ENCODE measurements at regions of chr1 and their contacts with region 1.

Region 1: DNA sequence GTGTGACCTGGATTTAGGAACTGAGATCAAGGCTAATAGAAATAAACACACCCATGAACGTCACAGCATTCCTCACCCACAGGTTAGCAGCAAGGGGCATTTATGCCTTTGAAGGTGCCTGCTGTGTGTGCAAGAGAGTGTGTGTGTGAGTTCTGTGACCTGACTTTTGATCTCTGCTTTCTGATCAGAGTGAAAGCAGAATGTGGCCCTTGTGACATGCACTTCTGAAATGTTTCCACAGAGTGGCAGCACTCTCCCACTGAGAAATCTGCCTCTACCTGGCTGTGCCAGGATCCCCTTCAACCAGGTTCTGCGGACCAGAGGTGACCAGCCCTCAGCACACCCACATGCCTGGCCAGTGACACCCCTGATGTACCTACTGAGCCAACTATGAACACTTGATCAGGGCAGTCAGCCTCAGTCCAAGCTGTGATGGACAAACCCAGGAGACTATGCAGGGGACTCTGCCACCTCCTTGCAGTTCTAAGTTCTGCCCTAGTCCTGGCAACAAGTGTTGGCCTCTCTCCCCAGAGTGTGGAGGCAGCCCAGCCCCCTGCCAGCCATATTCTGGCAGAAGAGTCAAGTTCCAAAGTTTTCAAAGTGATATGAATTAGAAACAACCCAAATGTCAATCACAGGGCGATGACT is 41.0 kb downstream of the RXRG start:
- DNase-seq: peak; percentile 24
- ATAC-seq: peak; percentile 90
- H3K4me3 ChIP-seq: no peak overlapping the region
- H3K27ac ChIP-seq: no peak overlapping the region
- H3K4me1 ChIP-seq: no peaks in the 10 kb centered on the region
- H3K27me3 ChIP-seq: 0 out of 2 replicates have a peak, but pooled peaks cover 8% of the 10 kb centered on the region
- CTCF ChIP-seq: peak; percentile 65 to 76 (median 65)
- POLR2A ChIP-seq: no peak
- RAD21 ChIP-seq: peak; percentile 89

Region 2: GRCh38 chr1:165191087-165191486 is 212.9 kb before region 1 on chr1:
- CTCF ChIA-PET with region 1: no interaction called
- POLR2A ChIA-PET with region 1: no interaction called
- RAD21 ChIA-PET with region 1: no interaction called
- intact Hi-C with region 1: no loop called
- DNase-seq: no peak
- ATAC-seq: no peak
- H3K4me3 ChIP-seq: no peak overlapping the region
- H3K27ac ChIP-seq: no peak overlapping the region
- H3K4me1 ChIP-seq: no peaks in the 10 kb centered on the region
- H3K27me3 ChIP-seq: peaks cover 20% of the 10 kb centered on the region
- CTCF ChIP-seq: no peak
- POLR2A ChIP-seq: no peak
- RAD21 ChIP-seq: no peak

Region 3: DNA sequence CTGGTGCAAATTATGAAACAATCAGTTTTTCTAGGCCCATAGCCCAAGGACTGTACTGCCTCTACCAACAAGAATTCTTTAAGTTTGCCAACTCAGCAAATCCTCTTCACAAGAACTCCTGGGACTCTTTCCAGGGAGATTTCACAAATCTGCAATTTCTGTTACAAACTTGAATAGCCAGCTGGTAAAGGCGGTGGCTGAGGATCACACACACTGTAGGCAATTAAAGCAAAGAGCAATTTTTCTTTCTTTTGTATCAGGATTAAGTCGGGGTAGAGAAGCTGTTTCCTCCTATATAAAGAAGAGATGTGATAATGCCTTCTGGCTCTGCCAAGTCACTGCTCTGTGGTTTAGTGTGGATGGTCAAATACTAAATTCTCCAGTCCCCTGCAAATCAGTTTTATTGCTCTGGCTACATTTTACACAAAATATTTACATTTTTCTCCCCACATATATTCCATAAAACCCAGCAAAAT is 292.7 kb after region 1 on chr1:
- CTCF ChIA-PET with region 1: no interaction called
- POLR2A ChIA-PET with region 1: no interaction called
- RAD21 ChIA-PET with region 1: no interaction called
- intact Hi-C with region 1: no loop called
- DNase-seq: no peak
- ATAC-seq: no peak
- H3K4me3 ChIP-seq: peak overlapping the region; percentile 72 to 92; a peak in 3 of 4 replicates
- H3K27ac ChIP-seq: no peak overlapping the region
- H3K4me1 ChIP-seq: peaks cover 12 to 23% of the 10 kb centered on the region in 2 experiments
- H3K27me3 ChIP-seq: no peaks in the 10 kb centered on the region
- CTCF ChIP-seq: no peak
- POLR2A ChIP-seq: no peak
- RAD21 ChIP-seq: no peak

Region 4: DNA sequence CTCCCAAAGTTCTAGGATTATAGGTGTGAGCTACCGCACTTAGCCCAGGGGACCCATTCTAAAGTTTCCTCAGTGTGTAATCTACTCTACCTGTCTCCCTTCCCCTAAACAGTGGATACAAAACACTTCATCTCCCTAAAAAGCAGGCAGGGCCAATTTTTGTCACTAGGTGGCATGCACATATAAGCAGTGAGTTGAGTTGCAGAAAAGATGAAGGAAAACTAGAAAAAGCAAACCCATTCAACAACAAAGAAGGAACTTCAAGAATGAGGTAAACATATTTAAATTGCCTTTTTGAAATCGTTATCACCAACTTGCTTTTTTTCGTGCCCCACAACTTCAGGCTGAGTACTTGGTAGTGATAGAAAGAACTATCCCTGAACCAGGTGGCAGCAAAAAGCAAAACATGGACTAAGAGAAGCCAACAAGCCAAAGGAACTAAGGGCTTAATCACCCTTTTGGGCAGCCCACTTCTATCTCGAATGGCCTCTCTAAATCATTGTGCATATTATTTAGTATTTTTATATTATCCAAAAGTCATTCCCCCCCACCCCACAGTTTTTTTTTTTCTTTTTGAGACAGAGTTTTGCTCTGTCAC is 314.1 kb after region 1 on chr1:
- CTCF ChIA-PET with region 1: no interaction called
- POLR2A ChIA-PET with region 1: no interaction called
- RAD21 ChIA-PET with region 1: no interaction called
- intact Hi-C with region 1: loop called (anchors 10 kb)
- DNase-seq: peak; percentile 48
- ATAC-seq: peak; percentile 90
- H3K4me3 ChIP-seq: no peak overlapping the region
- H3K27ac ChIP-seq: no peak overlapping the region
- H3K4me1 ChIP-seq: no peaks in the 10 kb centered on the region
- H3K27me3 ChIP-seq: no peaks in the 10 kb centered on the region
- CTCF ChIP-seq: peak; percentile 80 to 89 (median 82)
- POLR2A ChIP-seq: no peak
- RAD21 ChIP-seq: peak; percentile 93